ENCODE measurements at regions of chr3 and their contacts with region 1.

Region 1: GRCh38 chr3:120399372-120399771 is 50.2 kb upstream of the LRRC58 start:
- DNase-seq: no peak

Region 2: DNA sequence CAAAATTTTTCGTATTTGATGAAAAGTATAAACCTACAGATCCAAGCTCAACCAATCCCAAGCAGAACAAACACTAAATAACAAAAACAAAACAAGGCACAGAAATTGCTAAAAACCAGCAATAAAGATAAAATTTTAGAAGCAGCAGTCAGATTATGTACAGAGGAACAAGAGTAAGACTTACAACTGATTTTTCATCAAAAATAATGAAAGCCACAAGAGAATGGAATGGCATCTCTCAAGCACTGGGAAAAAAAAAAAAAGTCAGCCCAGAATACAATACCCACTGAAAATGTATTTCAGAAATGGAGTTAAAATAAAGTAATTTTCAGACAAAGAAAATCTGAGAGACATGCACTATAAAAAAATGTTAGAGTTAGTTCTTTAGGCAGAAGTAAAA is 141.4 kb before region 1 on chr3:
- intact Hi-C with region 1: loop called in 1 of 2 experiments (anchors 2 kb)
- DNase-seq: no peak

Region 3: GRCh38 chr3:120302361-120302760 is 97.0 kb before region 1 on chr3:
- intact Hi-C with region 1: no loop called
- DNase-seq: peak; percentile 73

Region 4: DNA sequence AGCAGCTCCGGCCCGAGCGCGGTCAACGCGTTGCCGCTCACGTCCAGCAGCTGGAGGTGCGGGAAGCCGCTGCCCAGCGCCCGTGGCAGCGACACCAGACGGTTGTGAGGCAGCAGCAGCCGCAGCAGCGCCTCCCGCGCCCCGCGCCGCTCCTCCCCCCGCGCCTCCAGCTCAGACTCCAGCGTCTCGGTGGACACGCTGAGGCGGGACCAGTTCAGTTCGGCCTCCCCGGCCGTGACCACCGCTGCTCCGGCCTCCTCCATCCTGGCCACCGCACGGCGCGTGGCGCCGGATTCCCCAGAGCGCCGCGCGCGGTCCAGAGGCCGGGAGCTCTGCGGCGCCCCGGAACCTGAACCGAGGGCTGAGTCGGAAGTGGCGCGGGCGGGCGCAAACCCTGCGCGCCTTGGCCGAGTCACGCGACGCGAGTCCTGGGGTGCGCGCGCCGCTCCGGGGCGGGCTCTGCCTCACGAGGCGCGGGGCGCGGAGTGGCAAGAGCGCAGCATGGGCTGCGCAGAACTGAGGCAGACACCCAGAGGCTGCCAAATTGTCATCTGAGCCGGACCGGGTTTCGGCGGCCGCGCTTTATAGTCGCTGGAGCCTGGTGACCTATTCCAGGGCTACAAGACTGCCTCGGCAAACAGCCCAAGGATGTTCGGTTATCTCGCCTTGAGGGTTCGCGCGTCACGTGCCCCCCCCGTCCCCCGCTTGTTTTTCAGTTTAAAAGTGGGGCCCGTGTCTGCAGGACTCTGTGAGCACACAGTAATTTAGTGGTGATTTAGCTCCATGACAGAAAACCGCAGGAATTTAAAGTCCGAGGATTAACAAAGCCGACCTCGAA is 50.2 kb before region 1 on chr3 and contains the start of gene LRRC58:
- intact Hi-C with region 1: no loop called
- DNase-seq: peak; percentile 97
- total RNA-seq, gene LRRC58: 26.7 to 29.0 TPM

Region 5: DNA sequence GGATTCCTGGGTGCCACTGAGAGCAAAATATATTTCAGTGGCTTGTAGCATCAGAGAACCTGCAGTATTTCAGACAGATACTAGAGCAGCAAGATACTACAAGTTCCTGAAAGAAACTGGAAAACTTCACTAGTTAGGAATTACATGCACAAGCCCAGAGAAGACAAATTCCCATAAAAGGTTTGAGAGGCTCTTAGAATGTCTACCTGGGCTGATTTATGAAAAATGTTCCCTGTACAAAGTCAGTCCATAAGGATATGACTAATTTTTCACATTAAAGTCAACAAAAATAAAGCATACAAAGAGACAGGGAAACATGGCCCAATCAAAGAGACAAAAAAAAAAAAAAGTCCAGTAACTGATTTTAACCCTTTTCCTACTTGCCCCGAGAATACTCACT is 843.8 kb after region 1 on chr3:
- intact Hi-C with region 1: no loop called
- DNase-seq: no peak